Heart right ventricle (tissue), 16 donors: ENCODE measurements at regions of chr1 and their contacts with region 1.

Region 1: DNA sequence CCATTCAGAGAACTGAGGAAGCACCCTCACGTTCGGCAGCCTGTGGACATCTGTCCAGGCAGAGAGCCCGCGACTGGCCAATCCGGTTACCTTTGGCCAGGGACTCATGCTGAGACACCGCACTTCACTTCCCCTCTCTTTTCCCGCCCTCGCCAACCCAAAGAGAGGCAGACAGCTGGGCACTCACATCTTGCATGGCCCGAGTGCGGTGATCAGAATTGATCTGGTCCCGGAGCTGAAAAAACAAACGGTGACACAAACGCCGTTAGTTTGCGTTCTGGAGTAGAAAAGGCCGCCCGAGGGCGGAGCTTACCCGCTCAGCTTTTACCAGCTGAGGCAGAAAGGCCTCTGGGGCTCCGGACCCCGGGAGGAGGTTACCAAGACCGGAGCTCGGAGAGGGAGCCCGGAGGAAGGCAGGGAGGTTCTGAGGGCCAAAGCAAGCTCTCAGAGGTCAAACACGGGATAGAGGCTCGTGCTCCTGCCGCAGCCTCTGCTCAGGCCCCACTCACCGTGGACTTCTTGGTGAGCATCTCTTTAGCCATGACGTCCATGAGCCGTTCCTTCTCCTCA is 376 bp downstream of the SF3A3 start:
- DNase-seq: peak in 1 of 2 donors; percentile 23
- ATAC-seq: peak; percentile 5 to 68 (median 32)
- H3K4me3 ChIP-seq: peak overlapping the region; percentile 61 to 91 (median 86)
- H3K27ac ChIP-seq: peak overlapping the region in 9 of 10 donors; percentile 71 to 86 (median 82)
- H3K4me1 ChIP-seq: peaks cover 0 to 27% (median 19%) of the 10 kb centered on the region in 9 donors
- H3K27me3 ChIP-seq: no peaks in the 10 kb centered on the region
- CTCF ChIP-seq: no peak

Region 2: DNA sequence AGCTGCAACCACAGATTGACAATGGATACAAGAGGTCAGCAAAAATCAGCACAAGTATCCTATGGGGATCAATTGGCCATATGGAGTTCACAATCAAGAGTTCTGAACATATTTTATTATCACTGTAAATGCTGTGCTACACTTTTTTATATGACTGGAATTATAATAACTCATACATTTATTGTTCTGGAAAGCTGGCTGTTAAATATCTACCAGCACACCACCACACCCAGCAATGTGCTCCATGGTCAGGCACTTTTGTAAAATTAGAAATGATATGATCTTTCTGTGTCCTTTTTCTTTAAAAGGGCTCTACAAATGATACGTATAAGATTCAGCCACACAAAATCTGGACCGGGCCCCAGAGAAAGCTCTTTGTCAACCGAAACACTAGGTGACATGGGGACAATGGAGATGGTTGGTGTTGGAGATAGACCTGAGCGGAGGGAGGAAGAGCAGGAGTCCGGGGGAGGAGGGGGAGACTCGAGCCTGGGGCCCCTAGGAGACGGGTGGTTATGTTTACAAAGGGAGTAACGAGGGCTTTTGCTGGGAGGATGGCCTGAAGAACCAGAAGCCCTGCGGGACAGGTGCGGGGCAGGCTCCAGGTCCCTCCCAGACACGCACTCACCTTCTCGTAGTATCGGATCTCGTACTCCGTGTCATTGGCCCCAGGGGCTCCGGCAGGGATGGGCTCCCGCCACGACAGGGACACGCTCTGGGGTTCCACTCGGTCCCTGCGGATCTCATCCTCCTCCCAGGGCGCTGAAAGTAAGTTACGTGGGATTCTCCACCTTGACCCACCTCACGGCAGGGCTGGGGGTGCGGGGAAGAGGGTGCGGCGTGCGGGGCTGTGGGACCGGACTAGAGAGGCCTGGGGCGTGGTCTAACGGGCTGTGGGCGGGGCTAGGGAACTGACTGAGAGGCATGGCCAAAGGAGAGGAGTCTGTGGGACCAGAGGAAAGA is 254.5 kb before region 1 on chr1:
- intact Hi-C with region 1: no loop called
- DNase-seq: no peak
- ATAC-seq: no peak
- H3K4me3 ChIP-seq: no peak overlapping the region
- H3K27ac ChIP-seq: no peak overlapping the region
- H3K4me1 ChIP-seq: no peaks in the 10 kb centered on the region
- H3K27me3 ChIP-seq: peaks cover 0 to 76% (median 50%) of the 10 kb centered on the region in 7 donors
- CTCF ChIP-seq: no peak

Region 3: DNA sequence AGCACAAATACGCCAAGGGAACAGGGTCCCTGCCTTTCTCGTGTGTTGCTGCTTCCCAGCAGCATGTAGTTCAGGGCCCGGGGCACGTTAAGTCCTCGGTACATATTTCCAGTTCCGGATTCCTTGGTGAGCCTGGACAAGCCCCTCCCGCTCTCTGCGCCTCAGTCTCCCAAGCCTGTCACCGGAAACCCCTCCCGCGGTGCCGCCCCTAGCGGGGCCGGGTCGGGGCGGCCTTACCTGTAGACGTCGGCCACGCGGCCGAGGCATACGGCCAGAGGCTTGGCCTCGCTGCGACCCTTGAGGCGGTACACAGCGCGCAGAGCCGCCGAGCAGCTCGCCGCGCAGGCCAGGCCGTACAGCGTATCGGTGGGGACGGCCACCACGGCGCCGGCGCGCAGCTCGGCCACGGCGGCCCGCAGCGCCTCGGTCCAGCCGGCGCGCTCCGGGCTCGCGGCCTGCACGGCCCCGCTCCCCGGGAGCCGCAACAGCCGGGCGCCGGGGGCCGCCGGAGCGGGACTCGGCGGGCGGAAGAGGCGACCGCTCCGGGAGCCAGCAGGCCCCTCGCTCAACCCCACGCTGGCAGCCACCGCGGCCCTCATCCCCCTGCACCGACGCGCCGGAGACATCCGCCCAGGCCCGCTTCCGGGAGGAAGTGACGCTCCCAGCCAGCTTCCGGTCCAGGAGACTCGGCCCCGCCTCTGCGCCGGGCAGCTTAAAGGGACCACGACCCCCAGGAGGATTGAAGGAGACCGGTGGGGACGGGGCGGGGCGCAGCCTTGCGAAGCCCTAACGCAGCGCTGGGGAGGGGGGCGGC is 181.7 kb before region 1 on chr1 and contains the starts of genes C1orf122 and YRDC:
- intact Hi-C with region 1: loop called in 1 of 10 experiments (anchors 10 kb)
- DNase-seq: peak; percentile 95 to 96
- ATAC-seq: peak; percentile 95 to 98 (median 96)
- H3K4me3 ChIP-seq: peak within 1 kb of the TSS; percentile 79 to 98 (median 87)
- H3K27ac ChIP-seq: peak within 1 kb of the TSS; percentile 76 to 99 (median 96)
- H3K4me1 ChIP-seq: peaks cover 7 to 45% (median 21%) of the 10 kb centered on the region in 9 donors
- H3K27me3 ChIP-seq: no peaks in the 10 kb centered on the region
- CTCF ChIP-seq: no peak
- total RNA-seq, gene C1orf122: 37.8 to 53.0 (median 46.0) TPM
- total RNA-seq, gene YRDC: 3.3 to 9.1 (median 5.5) TPM

Region 4: GRCh38 chr1:37883671-37884070 is 105.8 kb before region 1 on chr1:
- intact Hi-C with region 1: loop called in 3 of 10 experiments (anchors 5 to 10 kb)
- DNase-seq: no peak
- ATAC-seq: no peak
- H3K4me3 ChIP-seq: no peak overlapping the region
- H3K27ac ChIP-seq: peak overlapping the region in 1 of 10 donors; percentile 40
- H3K4me1 ChIP-seq: no peaks in the 10 kb centered on the region
- H3K27me3 ChIP-seq: no peaks in the 10 kb centered on the region
- CTCF ChIP-seq: no peak

Region 5: GRCh38 chr1:37890378-37891014 is 99.0 kb before region 1 on chr1:
- intact Hi-C with region 1: loop called in 3 of 10 experiments (anchors 10 kb)
- DNase-seq: no peak
- ATAC-seq: peak in 2 of 8 donors; percentile 51 to 56
- H3K4me3 ChIP-seq: no peak overlapping the region
- H3K27ac ChIP-seq: no peak overlapping the region
- H3K4me1 ChIP-seq: peaks cover 0 to 7% (median 0%) of the 10 kb centered on the region in 9 donors
- H3K27me3 ChIP-seq: no peaks in the 10 kb centered on the region
- CTCF ChIP-seq: peak; percentile 22 to 71 (median 58)

Region 6: GRCh38 chr1:38012363-38013226 is 23.1 kb after region 1 on chr1 and contains the start of gene UTP11:
- intact Hi-C with region 1: loop called in 3 of 10 experiments (anchors 1 to 2 kb)
- DNase-seq: peak; percentile 88 to 97
- ATAC-seq: peak; percentile 97 to 98 (median 97)
- H3K4me3 ChIP-seq: peak within 1 kb of the TSS; percentile 60 to 85 (median 78)
- H3K27ac ChIP-seq: peak within 1 kb of the TSS; percentile 80 to 96 (median 94)
- H3K4me1 ChIP-seq: peaks cover 19 to 71% (median 48%) of the 10 kb centered on the region in 9 donors
- H3K27me3 ChIP-seq: no peaks in the 10 kb centered on the region
- CTCF ChIP-seq: no peak
- total RNA-seq, gene UTP11: 24.1 to 59.8 (median 37.1) TPM

Region 7: DNA sequence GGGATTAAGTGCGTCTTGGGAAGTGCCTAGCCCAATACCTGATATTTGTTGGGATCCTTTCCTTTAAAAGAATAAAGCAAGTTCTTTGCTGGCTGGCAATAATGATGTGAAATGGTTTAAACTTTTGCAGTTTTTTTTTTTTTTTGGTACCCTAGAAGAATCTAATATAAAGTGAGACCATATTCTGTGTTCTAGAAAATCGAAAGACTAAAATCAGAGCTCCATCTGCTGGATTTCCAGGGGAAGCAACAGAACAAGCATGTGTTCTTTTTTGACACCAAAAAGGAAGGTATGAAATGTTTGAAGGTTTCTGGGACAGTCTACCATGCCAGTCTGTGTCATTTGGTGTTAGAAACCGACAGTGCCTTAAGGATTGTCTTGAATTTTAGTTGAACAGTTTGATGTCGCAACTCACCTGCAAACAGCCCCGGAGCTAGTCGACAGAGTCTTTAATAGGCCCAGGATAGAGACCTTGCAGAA is 29.5 kb after region 1 on chr1:
- intact Hi-C with region 1: loop called in 4 of 10 experiments (anchors 1 to 2 kb)
- DNase-seq: no peak
- ATAC-seq: no peak
- H3K4me3 ChIP-seq: no peak overlapping the region
- H3K27ac ChIP-seq: peak overlapping the region in 1 of 10 donors; percentile 18
- H3K4me1 ChIP-seq: peaks cover 13 to 50% (median 35%) of the 10 kb centered on the region in 9 donors
- H3K27me3 ChIP-seq: no peaks in the 10 kb centered on the region
- CTCF ChIP-seq: peak; percentile 17 to 72 (median 60)